ENCODE measurements at regions of chr7 and their contacts with region 1.

Region 1: GRCh38 chr7:99822731-99823718 is 4.8 kb upstream of the CYP3A43 start:
- DNase-seq: no peak
- H3K27ac ChIP-seq: no peak overlapping the region
- CTCF ChIP-seq: no peak

Region 2: GRCh38 chr7:98266840-98267239 is 1556.2 kb before region 1 on chr7:
- CTCF ChIA-PET with region 1: no interaction called
- POLR2A ChIA-PET with region 1: no interaction called
- DNase-seq: no peak
- H3K27ac ChIP-seq: no peak overlapping the region; the same call in 1 of the 2 replicates
- CTCF ChIP-seq: peak; percentile 36; the same call in 1 of the 2 replicates

Region 3: GRCh38 chr7:99364961-99365817 is 457.8 kb before region 1 on chr7:
- CTCF ChIA-PET with region 1: no interaction called
- POLR2A ChIA-PET with region 1: interaction called, 10 read pairs
- DNase-seq: peak; percentile 63
- H3K27ac ChIP-seq: peak overlapping the region; percentile 41
- CTCF ChIP-seq: peak; percentile 80

Region 4: GRCh38 chr7:99863847-99864440 is 40.9 kb after region 1 on chr7:
- CTCF ChIA-PET with region 1: no interaction called
- POLR2A ChIA-PET with region 1: no interaction called
- DNase-seq: no peak
- H3K27ac ChIP-seq: no peak overlapping the region
- CTCF ChIP-seq: no peak

Measured in RWPE1 (cell line).